Activated T-helper 2 cell treated with anti-CD3 and anti-CD28 coated beads, Interferon-gamma antibody, Interleukin-2, Interleukin-4, amounts not matched to agents 10 μg/mL and 5 μg/mL and 100 μg/mL, durations not matched to agents 14 hours and 24 hours and 36 hours (primary cell): ENCODE measurements at regions of chr7 and their contacts with region 1.

Region 1: DNA sequence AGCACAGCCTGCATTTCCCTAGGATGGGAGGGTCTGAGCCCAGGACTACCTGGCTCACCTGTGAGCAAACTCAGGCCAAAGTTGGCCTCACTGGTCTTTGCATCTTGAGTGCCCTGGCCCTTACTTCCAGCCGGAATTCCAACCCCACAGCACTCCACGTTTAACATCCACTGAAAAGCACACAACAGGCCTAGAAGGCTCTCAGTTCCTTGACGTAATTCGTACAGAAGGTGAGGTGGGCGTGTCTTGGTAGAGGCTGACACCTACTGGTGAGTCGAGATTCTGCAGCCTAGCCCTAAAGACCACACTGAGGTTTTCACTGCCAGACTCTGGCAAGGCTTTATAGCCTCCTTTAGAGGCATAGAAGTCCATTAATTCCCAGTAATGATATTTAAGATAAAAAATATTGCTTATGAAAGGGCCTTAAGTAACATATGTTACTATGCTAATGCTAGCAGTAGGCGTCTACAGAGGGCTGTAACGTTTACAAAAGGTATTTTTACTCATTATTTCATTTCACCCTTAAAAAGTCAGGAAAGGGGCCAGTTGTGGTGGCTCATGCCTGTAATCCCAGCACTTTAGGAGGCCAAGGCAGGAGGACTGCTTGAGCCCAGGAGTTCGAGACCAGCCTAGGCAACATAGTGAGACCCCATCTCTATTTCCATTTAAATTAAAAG is 95.8 kb downstream of the HIP1 start:
- DNase-seq: peak; percentile 51
- H3K4me3 Mint-ChIP-seq: no peak overlapping the region
- H3K27ac Mint-ChIP-seq: no peak overlapping the region
- H3K4me1 Mint-ChIP-seq: peaks cover 11% of the 10 kb centered on the region
- H3K27me3 Mint-ChIP-seq: peaks cover 3% of the 10 kb centered on the region

Region 2: GRCh38 chr7:75072978-75073282 is 570.0 kb before region 1 on chr7:
- intact Hi-C with region 1: loop called (anchors 5 kb)
- DNase-seq: no peak
- H3K4me3 Mint-ChIP-seq: peak overlapping the region; percentile 98
- H3K27ac Mint-ChIP-seq: peak overlapping the region; percentile 96
- H3K4me1 Mint-ChIP-seq: peaks cover 9% of the 10 kb centered on the region
- H3K27me3 Mint-ChIP-seq: no peaks in the 10 kb centered on the region

Region 3: GRCh38 chr7:75531359-75531821 is 111.6 kb before region 1 on chr7:
- intact Hi-C with region 1: loop called (anchors 1 kb)
- DNase-seq: no peak
- H3K4me3 Mint-ChIP-seq: no peak overlapping the region
- H3K27ac Mint-ChIP-seq: no peak overlapping the region
- H3K4me1 Mint-ChIP-seq: peaks cover 23% of the 10 kb centered on the region
- H3K27me3 Mint-ChIP-seq: no peaks in the 10 kb centered on the region

Region 4: DNA sequence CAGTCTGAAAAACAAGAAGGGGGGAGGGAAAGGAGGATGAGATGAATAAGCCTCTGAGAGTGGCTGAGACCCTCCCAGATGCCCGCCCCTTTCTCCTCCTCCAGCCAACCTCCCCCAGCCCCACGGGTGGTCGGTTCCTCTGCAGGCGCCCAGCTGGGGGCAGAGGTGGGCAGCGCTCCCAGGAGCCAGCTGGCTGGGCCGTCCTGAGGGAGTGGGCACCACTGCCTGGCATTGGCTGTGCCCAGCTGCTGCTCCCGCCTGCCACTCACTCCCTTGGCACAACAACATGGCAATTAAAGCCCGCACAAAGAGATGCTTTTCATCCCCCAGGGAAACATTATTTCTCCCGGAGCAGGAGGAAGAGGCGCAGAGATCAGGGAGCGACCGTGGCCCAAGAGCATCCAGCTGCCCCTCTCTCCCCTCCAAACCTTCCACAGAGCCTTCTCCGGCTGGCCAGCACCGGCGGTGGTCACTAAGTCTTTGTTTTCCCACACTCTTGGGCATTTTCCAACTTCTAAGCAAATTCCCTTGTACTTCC is 43.6 kb before region 1 on chr7:
- intact Hi-C with region 1: loop called (anchors 5 kb)
- DNase-seq: no peak
- H3K4me3 Mint-ChIP-seq: no peak overlapping the region
- H3K27ac Mint-ChIP-seq: no peak overlapping the region
- H3K4me1 Mint-ChIP-seq: peaks cover 23% of the 10 kb centered on the region
- H3K27me3 Mint-ChIP-seq: no peaks in the 10 kb centered on the region